ENCODE measurements at regions of chr7 and their contacts with region 1.

Region 1: GRCh38 chr7:19079066-19079465 is 38.4 kb downstream of the TWIST1 start:
- DNase-seq: peak; percentile 75
- H3K4me3 Mint-ChIP-seq: peak overlapping the region; percentile 65
- H3K27ac Mint-ChIP-seq: peak overlapping the region; percentile 88
- H3K4me1 Mint-ChIP-seq: peaks cover 19% of the 10 kb centered on the region
- H3K27me3 Mint-ChIP-seq: no peaks in the 10 kb centered on the region
- CTCF ChIP-seq: no peak

Region 2: GRCh38 chr7:19090526-19090925 is 11.5 kb after region 1 on chr7:
- CTCF ChIA-PET with region 1: no interaction called
- POLR2A ChIA-PET with region 1: interaction called, 10 read pairs
- intact Hi-C with region 1: no loop called
- DNase-seq: no peak
- H3K4me3 Mint-ChIP-seq: no peak overlapping the region
- H3K27ac Mint-ChIP-seq: no peak overlapping the region
- H3K4me1 Mint-ChIP-seq: no peaks in the 10 kb centered on the region
- H3K27me3 Mint-ChIP-seq: no peaks in the 10 kb centered on the region
- CTCF ChIP-seq: no peak

Region 3: GRCh38 chr7:19215412-19215811 is 136.3 kb after region 1 on chr7:
- CTCF ChIA-PET with region 1: no interaction called
- POLR2A ChIA-PET with region 1: no interaction called
- intact Hi-C with region 1: no loop called
- DNase-seq: no peak
- H3K4me3 Mint-ChIP-seq: no peak overlapping the region
- H3K27ac Mint-ChIP-seq: no peak overlapping the region
- H3K4me1 Mint-ChIP-seq: peaks cover 6% of the 10 kb centered on the region
- H3K27me3 Mint-ChIP-seq: no peaks in the 10 kb centered on the region
- CTCF ChIP-seq: no peak